ENCODE measurements at regions of chr1 and their contacts with region 1.

Region 1: DNA sequence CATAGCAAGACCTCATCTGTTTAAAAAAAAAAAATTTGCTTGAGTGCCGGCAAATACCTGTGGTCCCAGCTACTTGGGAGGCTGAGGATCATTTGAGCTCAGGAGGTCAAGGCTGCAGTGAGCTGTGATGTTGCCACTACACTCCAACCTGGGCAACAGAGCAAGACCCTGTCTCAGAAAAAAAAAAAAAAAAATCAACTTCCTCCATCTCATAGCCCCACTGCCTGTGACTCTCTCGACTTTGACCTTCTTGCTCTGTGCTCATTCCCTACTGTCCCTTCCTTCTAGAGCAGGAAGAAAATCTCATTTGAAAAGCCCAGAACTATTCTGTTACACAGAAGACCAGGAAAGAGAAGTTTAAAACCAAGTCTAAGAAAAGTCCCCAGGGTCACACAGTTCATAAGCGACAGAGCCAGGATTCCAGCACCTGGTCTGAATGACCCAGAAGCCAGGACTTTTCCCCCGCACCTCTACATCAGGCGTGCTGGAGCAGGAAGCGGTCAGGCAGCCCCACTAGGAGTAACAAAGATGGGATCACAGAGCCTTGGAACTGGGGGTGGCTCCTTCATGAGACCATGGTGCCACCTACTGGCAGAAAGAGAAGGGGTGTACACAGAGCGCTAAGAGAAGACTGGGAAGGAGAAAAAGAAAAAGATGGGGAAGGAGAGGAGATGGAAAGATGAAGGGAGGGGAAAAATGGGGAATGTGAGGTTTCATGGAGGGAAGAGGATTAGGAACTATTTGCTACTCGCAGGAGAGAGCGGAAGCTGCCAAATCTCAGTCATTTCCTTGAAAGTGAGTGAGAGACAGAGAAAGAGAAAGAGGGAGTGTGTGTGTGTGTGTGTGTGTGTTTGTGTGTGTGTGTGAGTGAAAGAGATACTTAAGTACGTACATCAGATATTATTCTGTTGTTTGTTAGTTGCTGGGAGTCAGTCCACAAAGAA is 3.1 kb upstream of the P3R3URF start:
- DNase-seq: peak; percentile 38 to 70 (median 58)
- ATAC-seq: peak; percentile 79
- H3K4me3 ChIP-seq: no peak overlapping the region
- H3K4me3 Mint-ChIP-seq: no peak overlapping the region
- H3K27ac ChIP-seq: no peak overlapping the region
- H3K27ac Mint-ChIP-seq: no peak overlapping the region
- H3K4me1 ChIP-seq: no peaks in the 10 kb centered on the region
- H3K4me1 Mint-ChIP-seq: peaks cover 0 to 8% (median 5%) of the 10 kb centered on the region in 7 donors
- H3K27me3 ChIP-seq: no peaks in the 10 kb centered on the region
- H3K27me3 Mint-ChIP-seq: no peaks in the 10 kb centered on the region

Region 2: GRCh38 chr1:45508295-45509151 is 670.9 kb before region 1 on chr1:
- CTCF ChIA-PET with region 1: no interaction called
- POLR2A ChIA-PET with region 1: no interaction called
- intact Hi-C with region 1: no loop called
- DNase-seq: no peak
- ATAC-seq: no peak
- H3K4me3 ChIP-seq: no peak overlapping the region
- H3K4me3 Mint-ChIP-seq: no peak overlapping the region
- H3K27ac ChIP-seq: no peak overlapping the region
- H3K27ac Mint-ChIP-seq: peak overlapping the region in 7 of 9 donors; percentile 3 to 87 (median 38)
- H3K4me1 ChIP-seq: no peaks in the 10 kb centered on the region
- H3K4me1 Mint-ChIP-seq: peaks cover 0 to 8% (median 3%) of the 10 kb centered on the region in 7 donors
- H3K27me3 ChIP-seq: no peaks in the 10 kb centered on the region
- H3K27me3 Mint-ChIP-seq: no peaks in the 10 kb centered on the region

Region 3: GRCh38 chr1:46036894-46037839 is 142.2 kb before region 1 on chr1:
- CTCF ChIA-PET with region 1: interaction called, 119 read pairs
- POLR2A ChIA-PET with region 1: no interaction called
- intact Hi-C with region 1: loop called (anchors 1 kb)
- DNase-seq: peak; percentile 58 to 85 (median 78)
- ATAC-seq: peak; percentile 90
- H3K4me3 ChIP-seq: no peak overlapping the region
- H3K4me3 Mint-ChIP-seq: no peak overlapping the region
- H3K27ac ChIP-seq: no peak overlapping the region
- H3K27ac Mint-ChIP-seq: no peak overlapping the region
- H3K4me1 ChIP-seq: no peaks in the 10 kb centered on the region
- H3K4me1 Mint-ChIP-seq: no peaks in the 10 kb centered on the region
- H3K27me3 ChIP-seq: no peaks in the 10 kb centered on the region
- H3K27me3 Mint-ChIP-seq: no peaks in the 10 kb centered on the region